Gastrocnemius medialis (tissue), 4 donors: ENCODE measurements at regions of chr2 and their contacts with region 1.

Region 1: GRCh38 chr2:179842498-179843153 is 18.8 kb downstream of the ZNF385B start:
- DNase-seq: no peak
- ATAC-seq: peak in 1 of 2 donors; percentile 59
- H3K4me3 ChIP-seq: no peak overlapping the region
- H3K27ac ChIP-seq: no peak overlapping the region
- H3K4me1 ChIP-seq: peaks cover 0 to 7% of the 10 kb centered on the region in 2 donors
- H3K27me3 ChIP-seq: no peaks in the 10 kb centered on the region
- CTCF ChIP-seq: peak in 4 of 5 experiments; percentile 22 to 49 (median 26)
- POLR2A ChIP-seq: no peak

Region 2: DNA sequence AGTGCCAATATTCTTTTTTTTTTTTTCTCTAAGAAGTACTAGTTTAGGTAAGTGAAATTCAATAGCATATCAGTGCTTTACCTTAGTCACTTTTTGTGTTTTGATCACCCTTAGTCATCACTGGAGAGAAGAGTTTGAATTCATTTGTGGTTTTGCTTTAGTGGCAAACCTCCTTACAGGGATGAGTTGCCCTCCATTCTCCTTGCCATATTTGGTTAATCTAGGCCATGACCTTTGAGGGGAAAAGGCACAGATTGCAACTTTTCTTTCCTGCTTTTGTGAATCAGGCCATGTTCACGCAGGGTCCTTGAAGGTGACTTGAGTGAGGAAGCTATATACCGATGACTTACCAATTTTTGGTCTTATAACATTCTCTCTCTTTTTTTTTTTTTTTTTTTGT is 1328.0 kb before region 1 on chr2:
- in situ Hi-C with region 1: no loop called
- intact Hi-C with region 1: no loop called
- DNase-seq: no peak
- ATAC-seq: no peak
- H3K4me3 ChIP-seq: no peak overlapping the region
- H3K27ac ChIP-seq: no peak overlapping the region
- H3K4me1 ChIP-seq: no peaks in the 10 kb centered on the region
- H3K27me3 ChIP-seq: no peaks in the 10 kb centered on the region
- CTCF ChIP-seq: no peak
- POLR2A ChIP-seq: no peak

Region 3: DNA sequence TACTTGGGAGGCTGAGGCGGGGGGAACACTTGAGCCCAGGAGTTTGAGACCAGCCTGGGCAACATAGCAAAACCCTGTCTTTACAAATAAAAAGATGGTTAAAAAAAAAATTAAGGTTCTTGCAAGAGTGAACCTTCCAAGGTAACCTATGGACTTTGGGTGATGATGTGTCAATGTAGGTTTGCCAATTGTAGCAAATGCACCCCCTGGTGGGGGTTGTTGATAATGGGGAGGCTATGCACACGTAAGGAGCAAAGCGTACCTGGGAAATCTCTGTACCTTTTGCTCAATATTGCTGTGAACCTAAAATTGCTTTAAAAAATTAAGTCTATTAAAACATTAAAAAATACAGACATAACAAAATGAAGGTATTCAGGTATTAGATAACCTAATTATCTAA is 94.0 kb after region 1 on chr2:
- in situ Hi-C with region 1: no loop called
- intact Hi-C with region 1: loop called (anchors 2 kb)
- DNase-seq: peak in 1 of 2 donors; percentile 16
- ATAC-seq: no peak
- H3K4me3 ChIP-seq: no peak overlapping the region
- H3K27ac ChIP-seq: no peak overlapping the region
- H3K4me1 ChIP-seq: peaks cover 0 to 8% of the 10 kb centered on the region in 2 donors
- H3K27me3 ChIP-seq: no peaks in the 10 kb centered on the region
- CTCF ChIP-seq: peak in 4 of 5 experiments; percentile 11 to 53 (median 32)
- POLR2A ChIP-seq: no peak

Region 4: GRCh38 chr2:180231015-180231414 is 388.4 kb after region 1 on chr2:
- in situ Hi-C with region 1: no loop called
- intact Hi-C with region 1: no loop called
- DNase-seq: no peak
- ATAC-seq: no peak
- H3K4me3 ChIP-seq: no peak overlapping the region
- H3K27ac ChIP-seq: no peak overlapping the region
- H3K4me1 ChIP-seq: no peaks in the 10 kb centered on the region
- H3K27me3 ChIP-seq: no peaks in the 10 kb centered on the region
- CTCF ChIP-seq: no peak
- POLR2A ChIP-seq: no peak